MCF 10A (cell line): ENCODE measurements at regions of chr20 and their contacts with region 1.

Region 1: DNA sequence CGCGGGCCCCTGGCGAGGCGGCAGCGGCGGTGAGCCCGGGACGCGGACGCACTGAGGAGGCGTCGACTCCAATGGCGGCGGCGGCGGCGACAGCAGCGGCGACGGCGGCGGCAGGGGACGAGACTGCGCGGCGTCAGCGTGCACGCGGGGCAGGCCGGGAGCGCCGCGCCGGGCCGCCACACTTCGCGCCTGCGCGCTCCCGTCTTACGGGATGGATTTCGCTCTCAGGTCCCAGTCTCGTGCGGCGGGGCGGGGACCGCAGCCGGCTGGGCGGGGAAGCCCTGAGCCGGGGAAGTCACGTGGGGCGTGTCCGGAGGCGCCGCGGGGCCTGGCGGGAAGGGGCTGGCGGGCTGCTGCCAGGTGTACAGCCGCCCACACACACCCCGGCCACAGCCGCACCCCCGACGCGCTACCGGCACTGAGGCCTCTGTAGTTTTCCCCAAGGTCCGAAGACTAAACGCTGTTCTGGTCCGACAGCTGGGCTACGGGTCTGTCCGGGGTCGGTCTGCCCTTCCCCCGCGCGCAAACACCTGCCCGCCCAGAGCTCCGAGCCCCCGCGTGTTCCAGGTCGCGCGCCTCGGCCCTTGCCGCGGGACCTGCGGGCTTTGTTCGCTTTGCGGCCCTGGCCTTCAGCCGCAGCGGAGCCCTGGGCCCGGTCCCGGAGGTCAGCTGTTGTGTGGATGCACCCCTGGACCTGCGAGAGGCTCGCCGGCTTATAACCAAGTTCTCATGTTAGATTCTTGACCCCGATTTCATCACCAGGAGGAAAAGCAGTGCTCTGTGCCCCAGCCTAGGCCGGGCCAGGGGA is at the start of gene YTHDF1:
- DNase-seq: peak; percentile 95
- H3K4me3 Mint-ChIP-seq: peak within 1 kb of the TSS; percentile 91
- H3K27ac Mint-ChIP-seq: peak within 1 kb of the TSS; percentile 92
- H3K4me1 Mint-ChIP-seq: peaks cover 35% of the 10 kb centered on the region
- H3K27me3 Mint-ChIP-seq: peaks cover 17% of the 10 kb centered on the region
- CTCF ChIP-seq: no peak
- total RNA-seq, gene YTHDF1: 47.1 and 49.5 TPM in 2 replicates

Region 2: DNA sequence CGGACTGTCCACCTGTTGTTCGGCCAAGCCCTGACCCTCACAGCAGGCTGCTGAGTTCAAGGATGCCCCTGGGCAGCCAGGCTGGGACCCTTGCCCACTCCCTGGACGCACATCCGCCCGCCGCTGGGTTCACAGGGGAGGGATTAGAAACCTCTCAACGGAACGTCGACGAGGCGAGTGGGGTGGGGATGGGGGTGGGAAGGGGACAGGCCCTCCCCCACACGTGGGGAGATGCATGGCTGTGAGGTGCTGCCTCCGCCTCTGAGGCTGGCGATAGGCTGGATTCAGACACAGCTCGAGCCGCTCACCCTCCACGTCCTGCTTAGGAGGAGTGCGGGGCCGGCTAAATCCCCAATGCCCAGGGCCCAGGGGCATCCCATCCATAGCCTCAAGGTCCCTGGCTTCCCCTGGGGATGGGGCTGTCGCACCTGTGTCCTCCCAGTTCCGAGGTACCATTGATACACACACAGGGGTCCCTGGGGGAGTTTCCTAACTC is 118.9 kb before region 1 on chr20:
- CTCF ChIA-PET with region 1: no interaction called
- POLR2A ChIA-PET with region 1: no interaction called
- intact Hi-C with region 1: no loop called
- DNase-seq: no peak
- H3K4me3 Mint-ChIP-seq: no peak overlapping the region
- H3K27ac Mint-ChIP-seq: no peak overlapping the region
- H3K4me1 Mint-ChIP-seq: no peaks in the 10 kb centered on the region
- H3K27me3 Mint-ChIP-seq: peaks cover 18% of the 10 kb centered on the region
- CTCF ChIP-seq: no peak

Region 3: GRCh38 chr20:63230800-63231268 is 14.6 kb after region 1 on chr20:
- CTCF ChIA-PET with region 1: interaction called, 86 read pairs
- POLR2A ChIA-PET with region 1: interaction called, 4 read pairs
- intact Hi-C with region 1: no loop called
- DNase-seq: peak; percentile 58
- H3K4me3 Mint-ChIP-seq: no peak overlapping the region
- H3K27ac Mint-ChIP-seq: no peak overlapping the region
- H3K4me1 Mint-ChIP-seq: no peaks in the 10 kb centered on the region
- H3K27me3 Mint-ChIP-seq: peaks cover 44% of the 10 kb centered on the region
- CTCF ChIP-seq: peak; percentile 31

Region 4: DNA sequence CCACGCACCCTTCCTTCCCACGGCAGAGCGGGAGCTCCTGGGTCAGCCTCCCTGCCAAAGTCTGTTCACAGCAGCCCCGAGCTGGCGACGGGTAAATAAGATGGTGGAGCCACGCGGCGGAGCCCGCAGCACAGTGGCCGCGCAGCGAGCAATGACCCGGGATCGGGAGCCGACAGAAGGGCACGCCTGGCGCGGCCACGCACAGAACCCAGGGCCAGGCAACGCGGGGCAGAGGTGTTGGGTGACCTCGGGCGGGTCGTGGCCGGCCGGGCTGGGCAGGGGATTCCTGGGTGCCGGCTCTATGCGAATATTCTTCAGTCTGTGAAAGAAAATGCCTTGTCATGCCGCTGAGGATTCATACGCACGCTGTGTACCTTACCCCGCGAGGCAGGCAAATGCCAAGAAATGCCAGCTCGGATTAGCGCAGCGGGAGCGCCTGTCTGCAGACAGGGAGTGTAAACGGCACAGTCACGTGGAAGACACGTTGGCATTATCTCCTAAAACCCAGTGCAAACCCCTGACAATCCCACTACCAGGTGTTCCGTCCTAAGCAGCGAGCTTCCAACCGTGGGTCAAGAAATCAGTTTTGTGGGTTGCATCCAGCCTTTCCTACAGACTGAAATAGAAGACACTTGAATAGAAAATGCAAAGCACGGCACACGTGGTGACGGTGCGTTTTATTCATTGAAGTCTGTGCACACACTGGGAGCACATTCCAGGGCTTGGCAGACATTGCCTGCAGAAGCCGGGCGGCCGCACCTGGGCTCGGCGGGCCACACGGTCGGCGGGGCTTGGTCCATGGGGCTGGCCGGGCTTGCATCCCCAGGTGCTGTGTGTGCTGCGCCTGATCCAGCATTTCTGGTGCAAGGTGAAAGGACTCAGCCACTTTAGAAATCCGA is 126.6 kb after region 1 on chr20:
- CTCF ChIA-PET with region 1: no interaction called
- POLR2A ChIA-PET with region 1: no interaction called
- intact Hi-C with region 1: no loop called
- DNase-seq: no peak
- H3K4me3 Mint-ChIP-seq: no peak overlapping the region
- H3K27ac Mint-ChIP-seq: no peak overlapping the region
- H3K4me1 Mint-ChIP-seq: no peaks in the 10 kb centered on the region
- H3K27me3 Mint-ChIP-seq: peaks cover 23% of the 10 kb centered on the region
- CTCF ChIP-seq: no peak